Left colon (tissue), 2 donors: ENCODE measurements at regions of chr6 and their contacts with region 1.

Region 1: GRCh38 chr6:75204222-75204958 is 1.5 kb downstream of the COL12A1 start:
- DNase-seq: peak; percentile 63 to 65
- ATAC-seq: peak; percentile 47

Region 2: GRCh38 chr6:73854998-73855718 is 1349.2 kb before region 1 on chr6:
- intact Hi-C with region 1: loop called in 1 of 2 experiments (anchors 5 kb)
- DNase-seq: no peak
- ATAC-seq: no peak

Region 3: GRCh38 chr6:73969971-73970970 is 1234.1 kb before region 1 on chr6:
- intact Hi-C with region 1: loop called in 1 of 2 experiments (anchors 5 kb)
- DNase-seq: no peak
- ATAC-seq: no peak

Region 4: GRCh38 chr6:74409447-74409846 is 794.9 kb before region 1 on chr6:
- intact Hi-C with region 1: loop called in 1 of 2 experiments (anchors 5 kb)
- DNase-seq: no peak
- ATAC-seq: peak; percentile 54

Region 5: GRCh38 chr6:75472885-75473284 is 268.5 kb after region 1 on chr6:
- intact Hi-C with region 1: no loop called
- DNase-seq: no peak
- ATAC-seq: no peak